Activated naive CD4-positive, alpha-beta T cell treated with anti-CD3 and anti-CD28 coated beads for 36 hours (primary cell): ENCODE measurements at regions of chr1 and their contacts with region 1.

Region 1: GRCh38 chr1:207084701-207085180 is 3.9 kb upstream of the C4BPB start:
- DNase-seq: peak; percentile 73
- H3K4me3 Mint-ChIP-seq: no peak overlapping the region
- H3K27ac Mint-ChIP-seq: no peak overlapping the region
- H3K4me1 Mint-ChIP-seq: peaks cover 23% of the 10 kb centered on the region
- H3K27me3 Mint-ChIP-seq: no peaks in the 10 kb centered on the region

Region 2: DNA sequence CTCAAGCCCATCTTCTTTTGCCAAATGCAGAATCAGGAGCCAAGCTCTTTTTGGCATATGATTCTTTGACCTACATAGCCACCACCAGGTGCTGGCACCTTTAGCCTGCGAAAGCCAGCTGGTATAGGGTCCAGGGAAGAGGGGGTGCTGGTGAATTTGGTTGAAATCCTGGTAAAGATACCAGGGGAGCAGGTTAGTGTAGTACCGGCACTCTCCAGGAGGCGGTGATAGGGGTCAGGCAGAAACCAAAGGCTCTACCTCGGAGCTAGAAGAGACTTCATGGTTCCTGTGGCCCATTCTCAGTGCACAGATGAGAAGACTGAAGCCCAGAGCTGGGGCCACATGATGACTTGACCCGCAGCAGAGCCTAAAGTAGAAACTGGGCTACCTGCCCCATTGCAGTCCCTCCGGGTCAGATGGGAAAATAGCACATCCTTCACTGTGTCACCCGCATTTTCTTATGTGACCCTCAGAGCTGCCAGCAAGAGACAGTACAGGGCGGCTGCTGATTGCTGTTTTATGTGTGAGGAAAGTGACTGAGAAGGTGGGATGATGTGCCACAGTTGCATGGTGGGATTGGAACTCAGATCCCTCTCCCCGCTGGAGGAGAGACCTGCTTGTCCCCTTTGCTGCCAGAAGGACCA is 350.1 kb before region 1 on chr1:
- CTCF ChIA-PET with region 1: no interaction called
- intact Hi-C with region 1: no loop called
- DNase-seq: peak; percentile 88
- H3K4me3 Mint-ChIP-seq: no peak overlapping the region
- H3K27ac Mint-ChIP-seq: no peak overlapping the region
- H3K4me1 Mint-ChIP-seq: peaks cover 53% of the 10 kb centered on the region
- H3K27me3 Mint-ChIP-seq: no peaks in the 10 kb centered on the region

Region 3: GRCh38 chr1:207181838-207182237 is 97.1 kb after region 1 on chr1:
- CTCF ChIA-PET with region 1: no interaction called
- intact Hi-C with region 1: loop called (anchors 5 kb)
- DNase-seq: no peak
- H3K4me3 Mint-ChIP-seq: no peak overlapping the region
- H3K27ac Mint-ChIP-seq: no peak overlapping the region
- H3K4me1 Mint-ChIP-seq: no peaks in the 10 kb centered on the region
- H3K27me3 Mint-ChIP-seq: no peaks in the 10 kb centered on the region

Region 4: GRCh38 chr1:207259391-207259790 is 174.7 kb after region 1 on chr1:
- CTCF ChIA-PET with region 1: no interaction called
- intact Hi-C with region 1: no loop called
- DNase-seq: no peak
- H3K4me3 Mint-ChIP-seq: no peak overlapping the region
- H3K27ac Mint-ChIP-seq: no peak overlapping the region
- H3K4me1 Mint-ChIP-seq: no peaks in the 10 kb centered on the region
- H3K27me3 Mint-ChIP-seq: no peaks in the 10 kb centered on the region

Region 5: GRCh38 chr1:207423560-207424292 is 339.0 kb after region 1 on chr1:
- CTCF ChIA-PET with region 1: no interaction called
- intact Hi-C with region 1: no loop called
- DNase-seq: no peak
- H3K4me3 Mint-ChIP-seq: no peak overlapping the region
- H3K27ac Mint-ChIP-seq: no peak overlapping the region
- H3K4me1 Mint-ChIP-seq: no peaks in the 10 kb centered on the region
- H3K27me3 Mint-ChIP-seq: peaks cover 3% of the 10 kb centered on the region